ENCODE measurements at regions of chr17 and their contacts with region 1.

Region 1: GRCh38 chr17:39636927-39637736 is at the start of gene STARD3:
- DNase-seq: peak; percentile 98
- CTCF ChIP-seq: peak; percentile 8

Region 2: GRCh38 chr17:39579318-39580081 is 57.6 kb before region 1 on chr17:
- in situ Hi-C with region 1: no loop called
- DNase-seq: no peak
- CTCF ChIP-seq: no peak

Region 3: GRCh38 chr17:39794249-39794970 is 157.3 kb after region 1 on chr17:
- in situ Hi-C with region 1: no loop called
- DNase-seq: peak; percentile 66
- CTCF ChIP-seq: no peak

Region 4: DNA sequence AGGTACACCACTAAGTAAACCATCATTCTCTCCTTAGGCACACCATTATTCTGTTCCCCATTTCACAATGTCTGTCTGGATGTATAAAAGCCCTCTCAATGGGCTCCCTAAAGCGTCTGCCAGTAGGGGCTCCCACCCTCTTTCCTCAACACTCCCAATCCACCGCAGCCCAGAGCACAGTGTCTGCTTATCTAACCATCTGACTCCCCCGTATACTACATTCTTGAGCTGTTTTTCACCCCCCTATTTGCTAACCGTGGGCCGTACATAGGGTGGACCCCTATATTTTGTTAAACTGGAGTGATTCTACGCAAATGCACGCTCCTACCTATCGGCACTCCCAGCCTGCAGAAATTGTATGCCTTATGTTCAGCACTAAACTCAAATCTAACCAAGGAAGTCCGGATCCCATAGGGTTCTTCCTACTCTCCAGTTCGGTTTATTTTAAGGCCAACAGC is 342.8 kb after region 1 on chr17:
- in situ Hi-C with region 1: loop called (anchors 10 kb)
- DNase-seq: no peak
- CTCF ChIP-seq: no peak

Measured in GM13977 (cell line).